ENCODE measurements at regions of chr11 and their contacts with region 1.

Region 1: GRCh38 chr11:44556735-44557409 is 8.6 kb upstream of the CD82 start:
- DNase-seq: peak; percentile 38 to 59 (median 56)
- H3K4me3 ChIP-seq: no peak overlapping the region
- H3K4me3 Mint-ChIP-seq: peak overlapping the region in 1 of 2 donors; percentile 59
- H3K27ac ChIP-seq: peak overlapping the region in 1 of 2 donors; percentile 34
- H3K27ac Mint-ChIP-seq: peak overlapping the region; percentile 13 to 81 (median 55)
- H3K4me1 ChIP-seq: peaks cover 29 to 30% of the 10 kb centered on the region in 2 donors
- H3K4me1 Mint-ChIP-seq: peaks cover 36% of the 10 kb centered on the region
- H3K27me3 ChIP-seq: no peaks in the 10 kb centered on the region
- H3K27me3 Mint-ChIP-seq: peaks cover 0 to 7% (median 0%) of the 10 kb centered on the region in 3 donors
- CTCF ChIP-seq: peak; percentile 89

Region 2: GRCh38 chr11:44592125-44592940 is 35.5 kb after region 1 on chr11:
- intact Hi-C with region 1: loop called (anchors 5 kb)
- DNase-seq: peak; percentile 93 to 97 (median 95)
- H3K4me3 ChIP-seq: no peak overlapping the region
- H3K4me3 Mint-ChIP-seq: peak overlapping the region in 1 of 2 donors; percentile 22
- H3K27ac ChIP-seq: peak overlapping the region; percentile 73 to 77
- H3K27ac Mint-ChIP-seq: peak overlapping the region; percentile 91 to 99 (median 95)
- H3K4me1 ChIP-seq: peaks cover 27 to 30% of the 10 kb centered on the region in 2 donors
- H3K4me1 Mint-ChIP-seq: peaks cover 33% of the 10 kb centered on the region
- H3K27me3 ChIP-seq: no peaks in the 10 kb centered on the region
- H3K27me3 Mint-ChIP-seq: peaks cover 0 to 3% (median 0%) of the 10 kb centered on the region in 3 donors
- CTCF ChIP-seq: no peak

Region 3: DNA sequence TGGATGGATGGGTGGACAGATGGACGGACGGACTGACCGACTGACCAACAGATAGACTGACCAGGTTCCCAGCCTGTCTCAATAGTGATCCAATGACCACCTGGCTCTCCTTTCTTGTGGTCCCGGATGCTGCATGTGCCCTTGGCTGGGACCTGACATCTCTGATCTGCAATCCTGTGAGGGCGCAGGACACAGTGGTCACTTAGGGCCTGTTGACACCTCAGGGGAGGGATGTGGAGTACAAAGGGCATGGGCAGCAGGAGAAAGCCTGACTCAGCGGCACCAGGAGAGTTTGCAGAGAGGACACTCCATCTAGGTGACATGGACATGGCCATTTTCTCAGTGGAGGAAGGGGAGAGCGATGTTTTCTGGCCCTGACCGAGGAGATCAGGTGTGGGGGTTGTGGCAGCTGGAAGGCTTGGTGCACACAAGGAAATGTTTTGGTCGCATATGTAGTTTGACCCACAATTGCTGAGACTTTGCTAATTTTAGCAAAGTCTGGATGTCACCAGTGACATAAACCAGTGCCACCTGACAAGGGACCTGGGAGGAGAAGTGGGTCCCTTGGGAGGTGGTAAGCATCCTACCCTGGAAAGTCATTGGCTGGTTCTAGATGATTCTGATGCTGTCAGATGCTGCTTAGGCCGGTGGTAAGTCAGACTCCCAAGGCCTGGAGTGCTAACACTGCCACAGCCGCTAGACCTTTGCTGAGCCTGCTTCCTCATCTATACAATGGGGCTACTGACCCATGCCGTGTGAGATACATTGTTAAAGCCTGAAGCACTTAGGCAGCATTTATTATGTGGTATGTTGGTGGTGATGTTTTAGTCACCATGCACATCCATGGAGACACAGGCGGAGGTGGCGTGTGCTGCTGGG is 59.3 kb after region 1 on chr11:
- intact Hi-C with region 1: loop called (anchors 1 to 2 kb)
- DNase-seq: no peak
- H3K4me3 ChIP-seq: no peak overlapping the region
- H3K4me3 Mint-ChIP-seq: no peak overlapping the region
- H3K27ac ChIP-seq: no peak overlapping the region
- H3K27ac Mint-ChIP-seq: peak overlapping the region in 4 of 7 donors; percentile 43 to 80 (median 54)
- H3K4me1 ChIP-seq: peaks cover 4 to 6% of the 10 kb centered on the region in 2 donors
- H3K4me1 Mint-ChIP-seq: peaks cover 11% of the 10 kb centered on the region
- H3K27me3 ChIP-seq: no peaks in the 10 kb centered on the region
- H3K27me3 Mint-ChIP-seq: peaks cover 0 to 4% (median 0%) of the 10 kb centered on the region in 3 donors
- CTCF ChIP-seq: no peak

Region 4: GRCh38 chr11:44621140-44621681 is 64.3 kb after region 1 on chr11:
- intact Hi-C with region 1: loop called (anchors 1 to 2 kb)
- DNase-seq: peak; percentile 36 to 57 (median 56)
- H3K4me3 ChIP-seq: no peak overlapping the region
- H3K4me3 Mint-ChIP-seq: no peak overlapping the region
- H3K27ac ChIP-seq: no peak overlapping the region
- H3K27ac Mint-ChIP-seq: no peak overlapping the region
- H3K4me1 ChIP-seq: peaks cover 21 to 28% of the 10 kb centered on the region in 2 donors
- H3K4me1 Mint-ChIP-seq: peaks cover 40% of the 10 kb centered on the region
- H3K27me3 ChIP-seq: no peaks in the 10 kb centered on the region
- H3K27me3 Mint-ChIP-seq: peaks cover 12 to 19% (median 16%) of the 10 kb centered on the region in 3 donors
- CTCF ChIP-seq: peak; percentile 94

Region 5: GRCh38 chr11:44775366-44775984 is 218.6 kb after region 1 on chr11:
- intact Hi-C with region 1: loop called in 1 of 2 experiments (anchors 10 kb)
- DNase-seq: peak in 2 of 3 donors; percentile 6 to 28
- H3K4me3 ChIP-seq: no peak overlapping the region
- H3K4me3 Mint-ChIP-seq: no peak overlapping the region
- H3K27ac ChIP-seq: no peak overlapping the region
- H3K27ac Mint-ChIP-seq: peak overlapping the region in 1 of 7 donors; percentile 33
- H3K4me1 ChIP-seq: no peaks in the 10 kb centered on the region
- H3K4me1 Mint-ChIP-seq: no peaks in the 10 kb centered on the region
- H3K27me3 ChIP-seq: no peaks in the 10 kb centered on the region
- H3K27me3 Mint-ChIP-seq: peaks cover 11 to 14% (median 13%) of the 10 kb centered on the region in 3 donors
- CTCF ChIP-seq: peak; percentile 82

Region 6: DNA sequence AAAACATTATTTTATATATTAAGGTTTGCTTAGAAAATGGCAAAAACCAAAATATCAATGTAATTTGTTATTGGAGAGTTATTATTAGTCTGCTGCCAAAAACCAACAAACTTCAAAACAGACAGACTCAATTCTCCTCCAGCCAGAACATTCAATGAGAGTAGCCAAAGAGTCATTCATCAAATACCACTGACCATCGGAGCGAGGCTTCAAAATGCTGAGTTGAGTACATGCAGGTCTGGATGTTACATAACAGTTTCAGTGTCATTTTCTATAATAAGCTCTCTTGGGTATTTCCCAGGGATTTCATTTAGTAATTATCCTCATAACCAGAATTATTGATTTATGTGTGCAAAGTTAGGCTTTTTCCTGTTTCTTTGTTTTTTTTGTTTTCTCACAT is 1066.0 kb after region 1 on chr11:
- intact Hi-C with region 1: no loop called
- DNase-seq: no peak
- H3K4me3 ChIP-seq: no peak overlapping the region
- H3K4me3 Mint-ChIP-seq: no peak overlapping the region
- H3K27ac ChIP-seq: no peak overlapping the region
- H3K27ac Mint-ChIP-seq: no peak overlapping the region
- H3K4me1 ChIP-seq: no peaks in the 10 kb centered on the region
- H3K4me1 Mint-ChIP-seq: no peaks in the 10 kb centered on the region
- H3K27me3 ChIP-seq: peaks cover 5 to 15% of the 10 kb centered on the region in 2 donors
- H3K27me3 Mint-ChIP-seq: peaks cover 10 to 29% (median 15%) of the 10 kb centered on the region in 3 donors
- CTCF ChIP-seq: no peak